Sciatic nerve (tissue), 2 donors: ENCODE measurements at regions of chr1 and their contacts with region 1.

Region 1: GRCh38 chr1:110502402-110503151 is 16.4 kb downstream of the KCNA10 start:
- DNase-seq: no peak
- ATAC-seq: peak; percentile 61

Region 2: GRCh38 chr1:110524311-110525251 is 22.0 kb after region 1 on chr1:
- intact Hi-C with region 1: loop called (anchors 2 kb)
- DNase-seq: peak; percentile 65
- ATAC-seq: peak; percentile 75